Activated naive CD4-positive, alpha-beta T cell treated with anti-CD3 and anti-CD28 coated beads for 36 hours (primary cell): ENCODE measurements at regions of chr20 and their contacts with region 1.

Region 1: GRCh38 chr20:1685304-1686052 is 27.9 kb upstream of the SIRPG start:
- DNase-seq: peak; percentile 56
- H3K4me3 Mint-ChIP-seq: peak overlapping the region; percentile 83
- H3K27ac Mint-ChIP-seq: peak overlapping the region; percentile 95
- H3K4me1 Mint-ChIP-seq: peaks cover 82% of the 10 kb centered on the region
- H3K27me3 Mint-ChIP-seq: no peaks in the 10 kb centered on the region

Region 2: DNA sequence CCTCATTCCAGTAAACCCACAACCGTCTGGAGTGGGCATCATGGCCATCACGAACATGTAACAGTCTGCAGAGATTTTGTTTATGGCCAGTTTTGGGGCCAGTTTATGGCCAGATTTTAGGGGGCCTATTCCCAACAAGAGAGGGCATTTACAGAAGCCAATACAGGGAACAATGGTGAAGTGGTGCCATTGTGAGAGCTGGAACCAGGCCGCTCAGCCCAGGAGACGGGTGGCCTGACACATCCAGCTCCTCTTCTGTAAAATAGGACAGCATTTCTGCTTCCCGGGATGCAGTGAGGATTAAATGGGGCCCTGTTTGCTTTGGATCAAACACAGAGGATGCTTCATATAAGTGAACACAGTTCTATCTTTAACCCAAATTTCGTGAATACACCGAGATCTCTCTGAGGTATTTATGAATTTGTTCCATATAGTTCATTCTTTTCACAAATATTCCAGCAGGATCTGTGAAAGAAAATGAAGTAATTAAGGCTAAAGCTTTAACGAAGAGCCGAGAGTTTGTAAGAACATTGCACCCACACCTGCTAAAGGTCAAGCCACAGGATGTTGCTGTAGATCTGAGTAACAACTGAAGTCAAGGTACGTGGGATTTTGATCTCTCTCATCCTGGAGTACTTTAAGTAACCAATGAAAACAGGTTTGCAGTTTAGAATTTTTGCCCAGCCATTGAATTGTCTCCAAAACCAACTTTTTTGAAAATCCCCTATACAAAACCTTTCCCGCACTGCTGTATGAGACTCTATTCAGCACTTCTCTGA is 13.4 kb before region 1 on chr20:
- CTCF ChIA-PET with region 1: no interaction called
- intact Hi-C with region 1: loop called (anchors 1 kb)
- DNase-seq: peak; percentile 73
- H3K4me3 Mint-ChIP-seq: peak overlapping the region; percentile 44
- H3K27ac Mint-ChIP-seq: peak overlapping the region; percentile 97
- H3K4me1 Mint-ChIP-seq: peaks cover 99% of the 10 kb centered on the region
- H3K27me3 Mint-ChIP-seq: no peaks in the 10 kb centered on the region